Activated T-helper 2 cell treated with anti-CD3 and anti-CD28 coated beads, Interferon-gamma antibody, Interleukin-2, Interleukin-4, amounts not matched to agents 10 μg/mL and 5 μg/mL and 100 μg/mL, durations not matched to agents 14 hours and 24 hours and 36 hours (primary cell): ENCODE measurements at regions of chr17 and their contacts with region 1.

Region 1: DNA sequence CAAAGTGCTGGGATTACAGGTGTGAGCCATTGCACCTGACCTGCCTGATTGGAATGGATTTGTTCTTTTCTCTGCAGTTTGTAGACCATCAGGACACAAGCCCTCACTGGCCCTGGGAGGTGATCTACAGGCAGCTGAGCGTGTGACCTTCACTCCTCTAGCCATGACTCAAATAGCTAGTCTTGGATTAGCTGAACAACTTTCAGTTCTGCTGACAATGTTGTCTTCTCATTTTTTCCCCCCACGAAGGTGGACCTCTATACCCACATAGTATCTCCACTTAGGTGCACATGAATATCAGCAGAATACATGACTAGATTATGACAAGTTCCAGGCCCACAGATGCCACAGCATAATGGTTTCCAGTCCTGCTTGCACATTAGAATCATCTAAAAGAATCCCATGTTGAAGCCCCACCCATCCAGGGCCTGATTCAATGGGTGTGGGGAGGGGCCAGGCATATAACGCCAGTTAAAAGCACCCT is 36.8 kb downstream of the HS3ST3B1 start:
- DNase-seq: no peak
- H3K4me3 Mint-ChIP-seq: peak overlapping the region; percentile 20
- H3K27ac Mint-ChIP-seq: peak overlapping the region; percentile 81
- H3K4me1 Mint-ChIP-seq: peaks cover 46% of the 10 kb centered on the region
- H3K27me3 Mint-ChIP-seq: no peaks in the 10 kb centered on the region

Region 2: DNA sequence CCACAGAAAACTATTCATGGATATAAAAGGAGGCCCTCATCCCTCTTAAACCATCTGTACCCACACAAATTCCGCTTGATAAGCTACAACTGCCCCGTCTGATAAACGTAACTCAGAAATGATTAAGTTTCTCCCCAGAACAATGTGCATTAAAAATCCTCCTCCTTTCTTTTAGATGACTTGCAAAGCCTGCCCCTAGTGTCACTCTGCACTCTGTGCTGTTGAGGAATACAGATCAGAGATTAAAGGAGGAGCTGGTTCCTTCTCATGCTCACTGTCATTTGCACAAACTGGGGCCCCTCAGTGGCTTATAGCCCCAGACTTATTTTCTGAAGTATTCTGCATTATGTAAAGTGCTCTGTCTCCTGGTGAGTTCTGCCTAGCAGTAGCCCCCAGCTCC is 134.2 kb before region 1 on chr17:
- intact Hi-C with region 1: loop called (anchors 2 kb)
- DNase-seq: peak; percentile 24
- H3K4me3 Mint-ChIP-seq: peak overlapping the region; percentile 35
- H3K27ac Mint-ChIP-seq: peak overlapping the region; percentile 83
- H3K4me1 Mint-ChIP-seq: peaks cover 80% of the 10 kb centered on the region
- H3K27me3 Mint-ChIP-seq: no peaks in the 10 kb centered on the region

Region 3: DNA sequence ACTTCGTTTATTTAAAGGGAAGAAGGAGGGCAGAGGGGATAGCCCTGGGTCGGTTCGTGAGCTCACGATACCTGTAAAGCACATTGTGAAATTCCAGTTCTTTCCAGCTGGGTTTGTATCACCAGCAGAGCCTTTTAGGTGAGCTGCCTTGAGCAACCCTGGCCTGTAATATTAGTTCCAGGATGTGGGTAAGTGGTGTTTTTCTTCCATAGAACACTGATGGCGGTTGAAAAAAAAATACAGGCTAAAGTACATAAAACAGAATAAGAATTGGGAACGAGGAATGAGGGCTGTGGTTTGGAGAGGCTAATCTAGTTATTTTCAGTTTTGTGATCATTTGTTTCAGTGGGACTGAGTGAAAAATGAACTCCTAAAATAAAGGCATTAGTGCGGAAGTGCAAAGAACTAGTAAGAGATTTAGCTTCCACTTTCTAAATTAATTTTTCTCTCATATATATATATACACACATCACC is 16.1 kb before region 1 on chr17:
- intact Hi-C with region 1: loop called (anchors 1 kb)
- DNase-seq: no peak
- H3K4me3 Mint-ChIP-seq: no peak overlapping the region
- H3K27ac Mint-ChIP-seq: peak overlapping the region; percentile 54
- H3K4me1 Mint-ChIP-seq: peaks cover 45% of the 10 kb centered on the region
- H3K27me3 Mint-ChIP-seq: peaks cover 4% of the 10 kb centered on the region

Region 4: DNA sequence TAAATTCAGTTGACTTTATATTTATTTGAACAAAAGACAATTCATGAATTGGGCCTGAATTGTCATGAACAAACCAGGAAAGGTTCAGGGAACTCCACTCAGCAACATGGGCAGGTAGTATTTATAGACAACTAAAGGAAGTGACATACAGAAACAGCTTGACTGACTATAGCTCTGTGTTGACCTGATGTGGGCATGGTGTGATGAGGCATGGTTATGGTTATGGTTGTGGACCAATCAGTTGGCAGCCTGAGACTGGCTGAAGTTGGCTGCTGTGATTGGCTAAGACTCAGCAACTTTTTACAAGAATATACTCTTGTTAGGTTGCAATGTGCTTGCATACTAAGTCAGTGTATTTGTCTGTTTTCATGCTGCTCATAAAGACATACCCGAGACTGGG is 71.7 kb after region 1 on chr17:
- intact Hi-C with region 1: loop called (anchors 1 kb)
- DNase-seq: no peak
- H3K4me3 Mint-ChIP-seq: no peak overlapping the region
- H3K27ac Mint-ChIP-seq: no peak overlapping the region
- H3K4me1 Mint-ChIP-seq: peaks cover 12% of the 10 kb centered on the region
- H3K27me3 Mint-ChIP-seq: no peaks in the 10 kb centered on the region

Region 5: DNA sequence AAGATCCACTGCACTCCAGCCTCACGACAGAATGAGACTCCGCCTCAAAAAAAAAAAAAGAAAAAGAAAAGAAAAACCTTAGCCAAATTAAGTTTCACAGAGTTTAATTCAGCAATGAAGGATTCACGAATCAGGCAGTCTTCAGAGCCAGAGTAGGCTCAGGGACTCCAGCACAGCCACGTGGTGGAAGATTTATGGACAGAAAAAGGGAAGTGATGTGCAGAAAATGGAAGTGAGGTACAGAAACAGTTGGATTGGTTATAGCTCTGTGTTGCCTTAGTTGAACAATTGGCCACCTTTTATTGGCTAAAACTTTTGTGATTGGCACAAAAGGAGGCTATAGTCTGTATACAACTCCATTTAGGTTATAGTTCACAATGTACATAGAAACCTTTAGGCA is 219.8 kb after region 1 on chr17:
- intact Hi-C with region 1: loop called (anchors 5 kb)
- DNase-seq: no peak
- H3K4me3 Mint-ChIP-seq: no peak overlapping the region
- H3K27ac Mint-ChIP-seq: no peak overlapping the region
- H3K4me1 Mint-ChIP-seq: peaks cover 12% of the 10 kb centered on the region
- H3K27me3 Mint-ChIP-seq: no peaks in the 10 kb centered on the region